Kidney (tissue), 22 donors: ENCODE measurements at regions of chr1 and their contacts with region 1.

Region 1: GRCh38 chr1:46527474-46528296 is 23.8 kb downstream of the KNCN start:
- DNase-seq: peak in 4 of 5 donors; percentile 77 to 86 (median 84)
- H3K4me3 ChIP-seq: no peak overlapping the region
- H3K27ac ChIP-seq: no peak overlapping the region
- H3K4me1 ChIP-seq: no peaks in the 10 kb centered on the region
- H3K27me3 ChIP-seq: peaks cover 14% of the 10 kb centered on the region
- CTCF ChIP-seq: peak; percentile 98

Region 2: GRCh38 chr1:46446646-46447498 is 80.8 kb before region 1 on chr1:
- intact Hi-C with region 1: loop called (anchors 5 kb)
- DNase-seq: peak in 4 of 5 donors; percentile 86 to 88 (median 87)
- H3K4me3 ChIP-seq: no peak overlapping the region
- H3K27ac ChIP-seq: no peak overlapping the region
- H3K4me1 ChIP-seq: peaks cover 0 to 4% (median 0%) of the 10 kb centered on the region in 3 donors
- H3K27me3 ChIP-seq: peaks cover 37% of the 10 kb centered on the region
- CTCF ChIP-seq: peak; percentile 85

Region 3: GRCh38 chr1:46724991-46725735 is 197.5 kb after region 1 on chr1:
- intact Hi-C with region 1: loop called (anchors 10 kb)
- DNase-seq: peak in 4 of 5 donors; percentile 72 to 92 (median 80)
- H3K4me3 ChIP-seq: no peak overlapping the region
- H3K27ac ChIP-seq: no peak overlapping the region
- H3K4me1 ChIP-seq: peaks cover 0 to 4% (median 0%) of the 10 kb centered on the region in 3 donors
- H3K27me3 ChIP-seq: no peaks in the 10 kb centered on the region
- CTCF ChIP-seq: peak; percentile 83